CD4-positive, alpha-beta T cell (primary cell): ENCODE measurements at regions of chr17 and their contacts with region 1.

Region 1: DNA sequence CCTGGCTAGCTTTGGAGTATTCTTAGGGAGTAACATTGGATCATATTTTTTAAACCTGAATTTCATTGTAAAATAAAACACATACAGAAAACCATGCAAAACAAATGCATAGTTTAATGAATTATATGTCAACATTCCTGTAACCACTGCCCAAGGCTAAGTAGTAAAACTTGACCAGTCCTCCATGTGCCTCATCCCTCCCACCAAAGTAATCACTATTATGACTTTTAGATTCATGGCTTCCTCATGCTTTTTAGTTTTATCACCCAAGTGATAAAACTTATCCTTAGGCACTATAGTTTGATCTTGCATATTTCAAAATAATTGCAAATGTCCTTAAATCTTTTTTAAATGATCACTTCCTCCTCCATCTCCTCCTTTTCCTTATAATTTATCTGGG is 20.4 kb downstream of the PRKCA start:
- DNase-seq: no peak
- ATAC-seq: no peak
- H3K4me3 ChIP-seq: no peak overlapping the region
- H3K4me3 Mint-ChIP-seq: no peak overlapping the region
- H3K27ac ChIP-seq: no peak overlapping the region
- H3K27ac Mint-ChIP-seq: peak overlapping the region; percentile 31
- H3K4me1 ChIP-seq: peaks cover 2% of the 10 kb centered on the region
- H3K4me1 Mint-ChIP-seq: peaks cover 67% of the 10 kb centered on the region
- H3K27me3 ChIP-seq: no peaks in the 10 kb centered on the region
- H3K27me3 Mint-ChIP-seq: no peaks in the 10 kb centered on the region
- CTCF ChIP-seq: no peak

Region 2: DNA sequence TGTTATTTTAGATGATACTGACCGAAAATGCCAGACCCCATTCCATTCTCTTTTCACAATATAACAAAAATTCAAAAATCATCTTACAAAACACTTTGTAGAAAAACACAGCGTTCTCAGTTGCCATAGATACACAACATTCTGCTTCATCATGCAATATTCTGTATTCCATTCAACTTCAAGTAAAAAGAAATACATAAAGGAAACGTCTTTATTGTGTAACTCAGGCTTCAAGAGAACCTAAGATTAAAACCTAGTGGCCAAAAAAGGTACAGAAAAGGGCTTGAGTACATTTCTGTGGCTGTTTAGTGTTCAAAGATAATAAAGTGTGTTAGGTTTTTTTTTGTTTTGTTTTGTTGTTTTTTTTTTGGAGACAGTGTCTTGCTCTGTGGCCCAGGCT is 381.3 kb before region 1 on chr17:
- CTCF ChIA-PET with region 1: no interaction called
- POLR2A ChIA-PET with region 1: no interaction called
- intact Hi-C with region 1: no loop called
- DNase-seq: no peak
- ATAC-seq: no peak
- H3K4me3 ChIP-seq: no peak overlapping the region
- H3K4me3 Mint-ChIP-seq: no peak overlapping the region
- H3K27ac ChIP-seq: no peak overlapping the region
- H3K27ac Mint-ChIP-seq: no peak overlapping the region
- H3K4me1 ChIP-seq: no peaks in the 10 kb centered on the region
- H3K4me1 Mint-ChIP-seq: no peaks in the 10 kb centered on the region
- H3K27me3 ChIP-seq: no peaks in the 10 kb centered on the region
- H3K27me3 Mint-ChIP-seq: no peaks in the 10 kb centered on the region
- CTCF ChIP-seq: no peak

Region 3: GRCh38 chr17:66310528-66311148 is 12.1 kb before region 1 on chr17:
- CTCF ChIA-PET with region 1: interaction called, 5 read pairs
- POLR2A ChIA-PET with region 1: interaction called, 5 read pairs
- intact Hi-C with region 1: loop called in 1 of 2 experiments (anchors 2 kb)
- DNase-seq: peak in 2 of 14 experiments; percentile 38 to 48
- ATAC-seq: peak; percentile 18
- H3K4me3 ChIP-seq: no peak overlapping the region
- H3K4me3 Mint-ChIP-seq: peak overlapping the region; percentile 32
- H3K27ac ChIP-seq: no peak overlapping the region
- H3K27ac Mint-ChIP-seq: peak overlapping the region; percentile 85
- H3K4me1 ChIP-seq: peaks cover 9% of the 10 kb centered on the region
- H3K4me1 Mint-ChIP-seq: peaks cover 95% of the 10 kb centered on the region
- H3K27me3 ChIP-seq: no peaks in the 10 kb centered on the region
- H3K27me3 Mint-ChIP-seq: no peaks in the 10 kb centered on the region
- CTCF ChIP-seq: no peak

Region 4: GRCh38 chr17:66855204-66855603 is 532.4 kb after region 1 on chr17:
- CTCF ChIA-PET with region 1: no interaction called
- POLR2A ChIA-PET with region 1: no interaction called
- intact Hi-C with region 1: no loop called
- DNase-seq: peak in 7 of 14 experiments; percentile 1 to 29 (median 15)
- ATAC-seq: no peak
- H3K4me3 ChIP-seq: no peak overlapping the region
- H3K4me3 Mint-ChIP-seq: no peak overlapping the region
- H3K27ac ChIP-seq: no peak overlapping the region
- H3K27ac Mint-ChIP-seq: no peak overlapping the region
- H3K4me1 ChIP-seq: no peaks in the 10 kb centered on the region
- H3K4me1 Mint-ChIP-seq: no peaks in the 10 kb centered on the region
- H3K27me3 ChIP-seq: no peaks in the 10 kb centered on the region
- H3K27me3 Mint-ChIP-seq: peaks cover 2% of the 10 kb centered on the region
- CTCF ChIP-seq: peak; percentile 25